Activated B cell treated with CpG ODN at 0.5 μM for 24 hours (primary cell): ENCODE measurements at regions of chr9 and their contacts with region 1.

Region 1: DNA sequence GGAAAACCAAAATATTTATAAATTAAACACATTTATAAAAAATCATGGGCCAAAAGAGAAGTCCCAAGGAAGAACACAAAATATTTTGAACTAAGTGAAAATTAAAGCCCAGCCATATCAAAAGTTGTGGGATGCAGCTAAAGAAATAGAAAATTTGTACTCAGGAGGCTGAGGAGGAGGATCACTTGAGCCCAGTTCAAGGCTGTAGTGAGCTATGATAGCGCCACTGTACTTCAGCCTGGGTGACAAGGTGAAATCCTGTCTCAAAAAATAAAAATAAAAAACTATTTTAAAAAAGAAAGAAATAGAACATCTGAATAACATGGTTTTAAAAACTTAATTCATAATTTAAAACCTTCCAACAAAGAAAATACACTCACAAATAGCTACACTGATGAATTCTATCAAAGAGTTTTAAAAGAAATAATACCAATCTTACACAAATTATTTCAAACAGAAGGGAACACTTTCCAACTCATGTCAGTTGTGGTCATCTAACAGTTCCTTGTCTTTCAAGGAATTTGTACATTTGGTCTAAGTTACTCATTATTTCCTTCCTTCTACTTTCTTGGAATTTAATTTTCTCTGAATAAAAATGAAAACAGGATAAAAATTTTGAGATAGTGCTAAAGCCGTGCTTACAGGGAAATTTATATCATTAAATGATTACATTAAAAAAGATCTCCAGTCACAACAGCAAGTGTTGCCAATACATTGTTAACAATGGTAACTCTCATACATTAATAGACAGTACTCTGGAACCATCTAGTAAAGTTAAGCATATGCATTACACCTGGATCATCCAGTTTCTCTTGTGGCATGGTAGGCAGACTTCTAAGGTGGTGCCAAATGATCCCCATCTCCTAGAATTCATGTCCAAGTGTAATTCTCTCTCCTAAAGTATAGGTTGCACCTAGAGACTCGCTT is 17.8 kb downstream of the PTBP3 start:
- DNase-seq: no peak
- ATAC-seq: no peak
- H3K4me3 Mint-ChIP-seq: no peak overlapping the region
- H3K27ac Mint-ChIP-seq: peak overlapping the region; percentile 41
- H3K4me1 Mint-ChIP-seq: peaks cover 68% of the 10 kb centered on the region
- H3K27me3 Mint-ChIP-seq: no peaks in the 10 kb centered on the region
- CTCF ChIP-seq: no peak

Region 2: DNA sequence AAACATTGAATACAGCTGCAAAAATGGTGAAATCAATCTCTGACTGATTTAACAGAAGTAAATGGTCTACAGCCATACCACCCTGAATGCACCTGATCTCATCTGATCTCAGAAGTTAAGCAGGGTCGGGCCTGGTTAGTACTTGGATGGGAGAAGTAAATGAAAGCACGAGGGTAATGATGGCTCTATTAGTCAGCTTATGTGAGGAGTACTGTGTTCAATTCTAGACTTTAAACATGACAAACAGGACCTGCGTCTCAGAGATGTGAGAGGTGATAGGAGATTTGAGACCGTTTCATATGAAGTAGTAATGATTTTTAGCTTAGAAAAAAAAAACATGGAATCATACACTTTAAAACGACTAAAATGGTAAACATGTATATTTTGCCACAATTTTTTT is 63.4 kb before region 1 on chr9:
- CTCF ChIA-PET with region 1: no interaction called
- POLR2A ChIA-PET with region 1: no interaction called
- intact Hi-C with region 1: no loop called
- DNase-seq: no peak
- ATAC-seq: no peak
- H3K4me3 Mint-ChIP-seq: no peak overlapping the region
- H3K27ac Mint-ChIP-seq: no peak overlapping the region
- H3K4me1 Mint-ChIP-seq: peaks cover 8% of the 10 kb centered on the region
- H3K27me3 Mint-ChIP-seq: no peaks in the 10 kb centered on the region
- CTCF ChIP-seq: no peak

Region 3: DNA sequence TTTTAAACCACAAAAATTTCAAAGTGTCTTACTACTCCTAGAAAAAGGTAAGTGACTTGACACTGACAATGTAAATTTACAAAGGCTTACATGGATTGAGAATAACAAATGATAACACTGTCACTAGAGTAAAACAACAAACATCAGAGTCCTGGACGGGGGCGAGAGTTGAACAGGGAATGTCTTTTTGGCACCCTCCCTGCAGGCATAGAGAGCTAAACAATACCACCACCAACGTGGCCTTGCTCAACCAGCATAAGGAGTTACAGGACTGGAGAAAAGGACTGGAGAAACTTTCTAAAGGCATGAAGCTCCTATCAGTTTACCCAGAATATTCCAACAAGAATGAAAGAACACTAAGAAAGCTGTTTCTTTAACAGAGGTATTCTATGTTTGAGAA is 37.4 kb before region 1 on chr9:
- CTCF ChIA-PET with region 1: no interaction called
- POLR2A ChIA-PET with region 1: no interaction called
- intact Hi-C with region 1: loop called (anchors 5 kb)
- DNase-seq: no peak
- ATAC-seq: no peak
- H3K4me3 Mint-ChIP-seq: no peak overlapping the region
- H3K27ac Mint-ChIP-seq: no peak overlapping the region
- H3K4me1 Mint-ChIP-seq: peaks cover 54% of the 10 kb centered on the region
- H3K27me3 Mint-ChIP-seq: no peaks in the 10 kb centered on the region
- CTCF ChIP-seq: no peak

Region 4: DNA sequence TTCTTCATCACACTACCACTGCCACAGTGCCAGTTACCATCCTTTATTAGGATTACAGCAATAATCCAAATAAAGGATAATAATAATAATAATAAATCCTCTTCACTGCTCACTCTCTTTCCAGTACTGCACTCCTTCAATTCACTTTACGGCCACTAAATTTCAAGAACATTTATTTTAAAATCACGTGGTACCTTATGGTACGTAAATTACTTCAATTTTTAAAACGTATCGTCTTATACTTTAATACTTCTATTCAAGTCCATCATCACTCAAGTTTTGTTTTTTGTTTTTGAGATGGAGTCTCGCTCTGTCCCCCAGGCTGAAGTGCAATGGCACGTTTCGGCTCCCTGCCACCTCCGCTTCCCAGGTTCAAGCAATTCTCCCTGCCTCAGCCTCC is 18.7 kb before region 1 on chr9:
- CTCF ChIA-PET with region 1: no interaction called
- POLR2A ChIA-PET with region 1: no interaction called
- intact Hi-C with region 1: loop called (anchors 2 kb)
- DNase-seq: no peak
- ATAC-seq: no peak
- H3K4me3 Mint-ChIP-seq: no peak overlapping the region
- H3K27ac Mint-ChIP-seq: no peak overlapping the region
- H3K4me1 Mint-ChIP-seq: peaks cover 40% of the 10 kb centered on the region
- H3K27me3 Mint-ChIP-seq: no peaks in the 10 kb centered on the region
- CTCF ChIP-seq: no peak

Region 5: GRCh38 chr9:112355427-112355897 is 39.9 kb after region 1 on chr9:
- CTCF ChIA-PET with region 1: no interaction called
- POLR2A ChIA-PET with region 1: interaction called, 11 read pairs
- intact Hi-C with region 1: no loop called
- DNase-seq: no peak
- ATAC-seq: no peak
- H3K4me3 Mint-ChIP-seq: no peak overlapping the region
- H3K27ac Mint-ChIP-seq: no peak overlapping the region
- H3K4me1 Mint-ChIP-seq: no peaks in the 10 kb centered on the region
- H3K27me3 Mint-ChIP-seq: no peaks in the 10 kb centered on the region
- CTCF ChIP-seq: no peak